ENCODE measurements at regions of chr18 and their contacts with region 1.

Region 1: DNA sequence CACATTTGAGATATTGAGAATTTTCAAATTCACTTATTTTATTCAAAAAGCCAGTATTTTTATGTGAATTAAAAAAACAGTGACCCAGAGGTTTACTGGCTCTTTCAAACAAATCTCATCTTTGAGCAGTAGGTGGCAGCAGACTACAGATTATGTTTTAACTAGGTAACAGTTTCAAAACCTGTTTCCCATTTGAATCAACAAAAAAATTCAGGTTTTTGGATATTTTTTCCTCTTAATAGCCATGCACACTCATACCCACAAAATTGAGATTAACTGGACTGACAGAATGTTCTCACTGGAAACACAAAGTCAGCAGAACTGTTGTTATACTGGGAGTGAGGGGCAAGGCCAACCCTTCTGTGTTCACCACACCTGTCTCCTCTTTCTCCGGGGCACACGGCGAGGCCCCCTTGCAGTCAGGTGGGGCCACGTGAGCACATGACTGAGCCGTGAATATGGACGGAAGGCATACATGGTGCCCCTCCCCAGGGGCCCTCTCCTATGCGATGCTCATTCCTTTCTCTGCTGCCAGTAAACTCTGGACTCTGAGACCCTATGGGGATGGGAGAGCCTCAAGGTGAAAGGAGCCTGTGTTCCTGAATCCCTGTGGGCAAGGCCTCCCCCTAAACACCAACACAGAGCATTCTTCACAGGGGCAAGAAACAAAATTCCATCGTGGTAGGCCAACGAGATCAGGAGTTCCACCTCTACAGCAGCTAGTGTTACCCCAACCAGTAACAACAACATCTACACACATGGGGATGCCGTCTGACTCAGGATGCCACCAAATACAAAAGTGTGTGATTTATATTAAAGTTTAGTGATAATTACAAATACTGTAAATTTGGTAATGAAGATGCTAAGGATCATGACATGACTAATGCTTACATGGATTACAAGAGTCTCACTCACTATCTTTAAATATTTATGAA is 80.4 kb downstream of the LPIN2 start:
- DNase-seq: no peak
- H3K4me3 Mint-ChIP-seq: peak overlapping the region; percentile 43
- H3K27ac Mint-ChIP-seq: peak overlapping the region; percentile 89
- H3K4me1 Mint-ChIP-seq: peaks cover 32% of the 10 kb centered on the region
- H3K27me3 Mint-ChIP-seq: no peaks in the 10 kb centered on the region

Region 2: GRCh38 chr18:2985628-2986027 is 53.1 kb after region 1 on chr18:
- intact Hi-C with region 1: loop called (anchors 1 kb)
- DNase-seq: no peak
- H3K4me3 Mint-ChIP-seq: no peak overlapping the region
- H3K27ac Mint-ChIP-seq: peak overlapping the region; percentile 20
- H3K4me1 Mint-ChIP-seq: peaks cover 72% of the 10 kb centered on the region
- H3K27me3 Mint-ChIP-seq: no peaks in the 10 kb centered on the region

Region 3: DNA sequence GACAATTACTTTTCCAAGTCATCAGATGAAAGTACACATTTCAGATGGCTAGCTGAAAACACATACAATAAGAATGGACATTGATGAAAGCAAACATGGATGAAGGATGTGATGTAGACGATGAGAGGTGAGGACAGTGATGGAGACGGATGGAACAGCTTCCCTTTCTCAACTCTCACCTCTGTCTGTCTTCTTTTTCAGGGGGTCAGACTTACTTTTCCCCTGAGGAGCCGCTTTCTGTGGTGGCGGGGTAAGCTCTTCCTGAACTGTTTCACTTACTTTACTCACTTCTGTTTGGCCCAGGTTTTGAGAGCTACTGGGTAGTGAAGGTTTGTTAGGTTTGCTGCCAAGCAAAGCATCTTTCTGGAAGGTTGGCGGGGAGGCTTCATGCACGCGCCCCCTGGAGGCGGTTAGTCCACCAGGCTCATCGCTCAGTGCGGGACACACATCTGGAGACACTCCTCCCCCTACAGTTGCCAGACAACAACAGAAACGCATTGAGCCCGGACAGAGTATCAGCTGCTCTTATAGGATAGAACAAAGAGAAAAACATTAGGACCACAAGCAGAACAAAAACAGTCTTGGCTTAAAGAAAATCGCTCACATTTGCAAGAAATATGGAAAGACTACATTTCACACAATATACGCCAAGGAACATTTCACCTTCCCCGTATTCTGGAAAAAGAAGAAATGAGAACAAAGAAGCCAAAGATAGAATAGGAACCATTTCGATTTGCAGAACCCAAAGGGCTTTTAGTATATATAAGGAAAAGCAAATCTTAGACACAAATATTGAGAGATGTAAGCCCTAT is 196.7 kb after region 1 on chr18:
- intact Hi-C with region 1: loop called (anchors 1 kb)
- DNase-seq: peak; percentile 72
- H3K4me3 Mint-ChIP-seq: no peak overlapping the region
- H3K27ac Mint-ChIP-seq: no peak overlapping the region
- H3K4me1 Mint-ChIP-seq: peaks cover 6% of the 10 kb centered on the region
- H3K27me3 Mint-ChIP-seq: no peaks in the 10 kb centered on the region

Region 4: DNA sequence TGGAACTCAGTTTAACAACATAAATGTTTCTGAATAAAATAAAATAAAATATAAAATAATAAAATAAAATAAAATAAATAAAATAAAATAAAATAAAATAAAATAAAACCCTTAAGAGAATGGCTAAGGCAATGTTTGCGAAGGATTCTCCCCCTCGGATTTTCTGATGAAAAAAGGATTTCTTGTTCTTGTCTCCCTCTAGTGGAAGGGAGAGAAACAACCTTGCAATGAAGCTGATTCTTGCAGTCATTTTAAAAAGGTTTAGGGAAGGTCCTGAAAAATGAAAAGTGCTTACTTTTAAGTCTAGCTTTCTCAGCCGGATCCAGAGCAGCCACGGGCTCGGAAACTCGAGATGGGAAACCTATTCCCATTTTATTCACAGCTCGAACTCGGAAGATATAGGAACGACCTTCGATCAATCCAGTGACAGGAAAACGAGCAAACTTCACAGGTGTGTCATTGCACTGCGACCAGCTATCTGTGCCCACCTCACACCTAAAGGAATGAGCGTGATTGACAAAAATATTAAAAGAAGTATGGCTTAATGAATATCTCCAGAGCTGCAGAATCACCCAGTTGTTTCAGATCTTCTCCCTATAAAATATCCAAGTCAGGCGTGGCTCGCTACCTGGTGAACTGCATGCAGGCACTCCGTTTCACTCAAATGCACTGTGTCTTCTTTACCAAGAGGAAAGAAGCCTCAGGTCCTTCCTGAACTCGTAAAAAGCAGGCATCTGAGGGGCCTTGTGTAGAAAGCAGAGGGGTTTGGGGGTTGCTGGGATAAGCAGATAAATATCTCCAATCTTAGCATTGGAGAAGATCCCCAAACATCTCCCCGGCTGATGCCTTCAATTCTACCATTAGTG is 219.1 kb after region 1 on chr18:
- intact Hi-C with region 1: loop called (anchors 1 kb)
- DNase-seq: no peak
- H3K4me3 Mint-ChIP-seq: no peak overlapping the region
- H3K27ac Mint-ChIP-seq: no peak overlapping the region
- H3K4me1 Mint-ChIP-seq: peaks cover 10% of the 10 kb centered on the region
- H3K27me3 Mint-ChIP-seq: peaks cover 6% of the 10 kb centered on the region

Measured in activated T-helper 2 cell treated with anti-CD3 and anti-CD28 coated beads, Interferon-gamma antibody, Interleukin-2, Interleukin-4, amounts not matched to agents 10 μg/mL and 5 μg/mL and 100 μg/mL, durations not matched to agents 14 hours and 24 hours and 36 hours (primary cell).